Right cardiac atrium (tissue), 5 donors: ENCODE measurements at regions of chr9 and their contacts with region 1.

Region 1: DNA sequence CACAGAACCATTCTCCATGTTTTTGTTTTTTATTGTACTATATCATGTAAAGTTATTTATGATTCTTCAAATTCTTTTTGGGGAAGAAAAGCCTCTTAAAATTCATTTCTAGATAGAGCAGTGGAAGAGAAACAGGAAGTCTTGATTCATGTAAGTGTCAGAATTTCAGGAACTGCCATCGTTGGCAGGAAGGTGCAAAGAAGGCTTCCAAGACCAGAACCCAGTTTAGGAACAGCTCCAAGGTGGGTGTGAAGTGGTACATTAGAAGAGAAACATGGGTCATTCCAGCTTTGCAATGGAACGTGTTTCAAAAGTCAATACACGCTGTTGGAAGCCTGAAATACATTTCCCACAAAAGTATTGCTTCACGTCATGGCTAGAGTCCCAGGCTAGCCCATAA is 14.8 kb downstream of the SAXO1 start:
- DNase-seq: no peak
- ATAC-seq: no peak
- H3K4me3 ChIP-seq: no peak overlapping the region
- H3K27ac ChIP-seq: no peak overlapping the region
- H3K4me1 ChIP-seq: no peaks in the 10 kb centered on the region
- H3K27me3 ChIP-seq: no peaks in the 10 kb centered on the region

Region 2: GRCh38 chr9:18255158-18255629 is 763.0 kb before region 1 on chr9:
- intact Hi-C with region 1: loop called in 2 of 4 experiments (anchors 5 to 10 kb)
- DNase-seq: peak; percentile 79 to 84 (median 80)
- ATAC-seq: peak; percentile 86 to 93
- H3K4me3 ChIP-seq: no peak overlapping the region
- H3K27ac ChIP-seq: no peak overlapping the region
- H3K4me1 ChIP-seq: peaks cover 2% of the 10 kb centered on the region
- H3K27me3 ChIP-seq: no peaks in the 10 kb centered on the region

Region 3: DNA sequence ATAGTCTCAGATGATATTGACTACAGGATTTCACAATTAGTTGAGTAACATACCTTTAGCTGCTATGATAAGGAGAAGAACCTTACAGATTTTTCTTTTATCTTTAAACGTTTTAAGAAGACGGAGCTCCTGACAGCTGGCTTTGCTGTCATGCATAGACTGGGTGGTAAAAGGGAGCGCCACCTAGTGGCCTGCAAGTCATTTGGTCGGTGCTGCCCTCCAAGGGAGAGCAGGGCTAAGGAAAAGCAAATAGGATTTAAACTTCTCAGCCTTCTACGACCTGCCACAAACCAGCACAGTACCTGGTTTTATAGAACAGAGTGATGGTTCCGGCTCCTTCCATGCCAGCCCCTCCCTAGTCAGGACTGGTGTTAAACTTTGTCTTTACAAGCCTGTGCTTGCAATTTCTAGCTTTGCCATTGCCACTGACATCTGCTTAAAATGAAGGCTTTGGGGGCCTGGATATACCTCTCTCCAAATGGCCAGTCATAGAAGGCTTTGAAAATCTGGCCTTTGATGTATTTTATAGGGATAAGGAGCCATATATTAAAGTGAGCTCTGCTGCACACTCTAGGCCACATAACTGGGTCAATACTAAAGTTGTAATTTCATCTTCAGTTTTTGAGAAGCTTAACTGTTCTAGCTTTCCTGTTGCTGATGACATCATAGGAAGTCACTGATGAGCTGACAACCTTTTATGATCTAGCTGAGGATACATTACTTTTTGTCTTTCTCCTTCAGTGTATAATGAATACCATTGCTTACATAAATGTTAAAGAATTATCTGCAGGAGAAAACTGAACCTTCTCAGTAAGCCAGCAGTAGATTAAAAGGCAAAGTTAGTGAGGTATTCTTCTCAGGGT is 575.3 kb before region 1 on chr9:
- intact Hi-C with region 1: loop called in 3 of 4 experiments (anchors 10 kb)
- DNase-seq: peak; percentile 71 to 83 (median 83)
- ATAC-seq: peak; percentile 74 to 85
- H3K4me3 ChIP-seq: no peak overlapping the region
- H3K27ac ChIP-seq: no peak overlapping the region
- H3K4me1 ChIP-seq: peaks cover 1% of the 10 kb centered on the region
- H3K27me3 ChIP-seq: no peaks in the 10 kb centered on the region